ENCODE measurements at regions of chr6 and their contacts with region 1.

Region 1: GRCh38 chr6:3742426-3743344 is 8.8 kb downstream of the PXDC1 start:
- ATAC-seq: peak; percentile 8 to 81 (median 72)
- H3K4me3 ChIP-seq: no peak overlapping the region
- H3K27ac ChIP-seq: peak overlapping the region in 1 of 2 donors; percentile 29
- H3K4me1 ChIP-seq: peaks cover 13 to 18% of the 10 kb centered on the region in 2 donors

Region 2: GRCh38 chr6:3281631-3282475 is 460.8 kb before region 1 on chr6:
- in situ Hi-C with region 1: loop called in 8 of 9 experiments (anchors 10 to 25 kb)
- ATAC-seq: peak in 6 of 8 experiments; percentile 12 to 55 (median 44)
- H3K4me3 ChIP-seq: no peak overlapping the region
- H3K27ac ChIP-seq: peak overlapping the region; percentile 3 to 32
- H3K4me1 ChIP-seq: peaks cover 20 to 23% of the 10 kb centered on the region in 2 donors

Region 3: DNA sequence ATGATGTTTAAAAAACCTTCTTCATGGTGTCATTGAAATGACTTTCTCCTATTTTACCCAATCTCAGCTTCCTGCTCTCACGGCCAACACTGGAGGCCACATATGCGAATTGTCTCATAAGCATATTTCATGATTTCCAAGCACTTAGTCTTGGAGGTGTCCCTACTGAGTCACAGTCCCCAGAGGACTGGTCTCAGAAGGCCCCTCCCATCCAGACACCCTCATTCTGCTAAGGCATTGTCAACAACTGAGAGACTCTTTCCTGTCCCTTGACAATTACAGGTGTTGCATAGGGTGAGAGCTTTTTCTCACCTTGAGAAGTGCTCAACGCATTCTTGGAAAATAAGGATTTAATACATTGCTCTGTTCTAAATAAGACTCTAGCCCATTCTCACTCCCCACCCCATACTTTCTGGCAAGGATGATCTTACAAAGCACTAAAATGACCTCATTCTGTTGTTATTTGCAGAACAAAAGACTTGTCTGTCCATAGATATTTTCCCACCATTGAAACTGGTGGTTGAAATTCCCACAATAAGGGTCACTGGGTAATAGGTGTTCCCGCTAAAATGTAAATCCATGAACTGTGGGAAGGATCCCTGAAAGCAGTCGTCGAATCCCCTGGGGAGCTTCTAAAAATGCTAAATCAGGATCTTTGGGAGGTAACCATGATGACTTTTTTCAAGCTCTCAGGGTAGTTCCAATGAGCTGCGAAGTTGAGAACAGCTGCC is 253.5 kb before region 1 on chr6:
- in situ Hi-C with region 1: no loop called
- ATAC-seq: peak; percentile 46 to 86 (median 60)
- H3K4me3 ChIP-seq: no peak overlapping the region
- H3K27ac ChIP-seq: peak overlapping the region in 1 of 2 donors; percentile 57
- H3K4me1 ChIP-seq: peaks cover 25 to 30% of the 10 kb centered on the region in 2 donors

Region 4: DNA sequence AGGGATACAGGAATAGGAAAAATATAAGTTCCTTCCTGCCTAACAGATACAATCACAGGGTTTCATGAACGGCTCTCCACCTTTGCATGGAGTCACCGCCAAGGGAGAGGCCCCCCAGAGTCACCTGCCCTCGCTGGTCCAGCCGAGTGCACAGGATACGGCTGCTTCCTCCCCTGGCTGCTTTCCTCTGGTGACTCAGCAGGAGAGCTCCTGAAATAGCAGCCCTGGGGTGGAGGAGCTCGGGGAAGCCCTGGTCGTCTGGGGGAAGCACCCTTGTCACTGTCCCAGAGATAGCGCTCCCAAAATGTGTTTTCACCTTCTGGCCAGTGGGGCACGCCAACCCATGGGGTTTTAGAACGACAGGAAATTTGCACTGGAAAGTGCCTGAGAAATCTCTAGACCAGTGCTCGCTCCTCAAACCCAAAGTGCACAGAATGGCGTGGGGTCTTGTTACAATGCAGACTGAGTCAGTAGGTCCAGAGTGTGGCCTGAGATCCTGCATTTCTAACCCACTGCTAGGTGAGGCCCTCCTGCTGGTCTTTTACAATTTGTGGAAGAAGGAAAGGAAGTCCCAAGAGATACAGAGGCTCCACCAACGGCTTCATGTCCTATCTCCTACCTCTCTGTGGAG is 70.6 kb after region 1 on chr6:
- in situ Hi-C with region 1: no loop called
- ATAC-seq: peak; percentile 4 to 92 (median 73)
- H3K4me3 ChIP-seq: no peak overlapping the region
- H3K27ac ChIP-seq: no peak overlapping the region
- H3K4me1 ChIP-seq: peaks cover 0 to 6% of the 10 kb centered on the region in 2 donors

Region 5: GRCh38 chr6:3977875-3978711 is 235.4 kb after region 1 on chr6:
- in situ Hi-C with region 1: loop called in 4 of 9 experiments (anchors 10 to 25 kb)
- ATAC-seq: peak; percentile 69 to 100 (median 80)
- H3K4me3 ChIP-seq: no peak overlapping the region
- H3K27ac ChIP-seq: no peak overlapping the region
- H3K4me1 ChIP-seq: no peaks in the 10 kb centered on the region

Region 6: GRCh38 chr6:4008324-4009047 is 265.8 kb after region 1 on chr6:
- in situ Hi-C with region 1: loop called in 2 of 9 experiments (anchors 10 to 25 kb)
- ATAC-seq: peak; percentile 50 to 86 (median 71)
- H3K4me3 ChIP-seq: no peak overlapping the region
- H3K27ac ChIP-seq: no peak overlapping the region
- H3K4me1 ChIP-seq: peaks cover 0 to 3% of the 10 kb centered on the region in 2 donors